HAP-1 (cell line): ENCODE measurements at regions of chr3 and their contacts with region 1.

Region 1: GRCh38 chr3:55485211-55485791 is 1.8 kb downstream of the WNT5A start:
- DNase-seq: peak; percentile 80 to 90
- H3K4me3 ChIP-seq: peak overlapping the region; percentile 66
- H3K4me1 ChIP-seq: peaks cover 2% of the 10 kb centered on the region; the same call in 1 of the 2 replicates
- H3K27me3 ChIP-seq: no peaks in the 10 kb centered on the region

Region 2: GRCh38 chr3:55721716-55722484 is 236.6 kb after region 1 on chr3:
- in situ Hi-C with region 1: loop called (anchors 10 kb)
- DNase-seq: peak in 1 of 2 experiments; percentile 42
- H3K4me3 ChIP-seq: no peak overlapping the region
- H3K4me1 ChIP-seq: no peaks in the 10 kb centered on the region
- H3K27me3 ChIP-seq: no peaks in the 10 kb centered on the region

Region 3: GRCh38 chr3:55790620-55791350 is 305.5 kb after region 1 on chr3:
- in situ Hi-C with region 1: no loop called
- DNase-seq: no peak
- H3K4me3 ChIP-seq: no peak overlapping the region
- H3K4me1 ChIP-seq: no peaks in the 10 kb centered on the region
- H3K27me3 ChIP-seq: no peaks in the 10 kb centered on the region

Region 4: DNA sequence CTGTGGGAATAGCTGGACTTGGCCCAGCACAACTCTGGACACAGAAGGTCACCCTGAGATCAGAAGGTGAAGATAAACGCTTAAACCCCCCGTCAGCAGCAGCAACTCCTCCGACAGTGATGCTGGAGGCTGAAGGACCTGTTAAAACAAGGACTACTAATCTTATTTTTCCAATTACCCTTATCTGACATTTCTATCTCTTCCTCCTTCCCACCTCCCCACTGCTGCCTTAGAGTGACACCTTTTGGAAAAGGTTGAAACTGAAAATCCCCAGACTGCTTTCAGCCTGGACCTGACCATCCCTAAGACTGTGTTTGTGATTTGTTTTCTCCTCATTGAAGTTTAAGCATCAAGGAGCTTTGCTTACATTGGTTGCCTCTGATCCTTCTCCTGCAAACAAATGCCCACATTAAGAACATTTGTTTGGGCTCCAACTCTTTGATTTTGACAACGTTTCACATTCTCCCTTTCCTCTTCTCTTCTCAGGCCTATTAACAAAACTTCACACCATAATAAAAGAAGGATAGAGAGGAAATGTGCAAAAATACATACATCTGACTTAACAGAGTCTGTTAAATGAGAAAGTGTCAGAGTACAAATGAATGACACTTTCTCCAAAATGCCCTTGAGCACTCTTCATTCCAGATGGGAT is 412.4 kb after region 1 on chr3:
- in situ Hi-C with region 1: loop called (anchors 10 kb)
- DNase-seq: peak; percentile 47 to 56
- H3K4me3 ChIP-seq: no peak overlapping the region
- H3K4me1 ChIP-seq: peaks cover 3% of the 10 kb centered on the region; the same call in 1 of the 2 replicates
- H3K27me3 ChIP-seq: no peaks in the 10 kb centered on the region

Region 5: DNA sequence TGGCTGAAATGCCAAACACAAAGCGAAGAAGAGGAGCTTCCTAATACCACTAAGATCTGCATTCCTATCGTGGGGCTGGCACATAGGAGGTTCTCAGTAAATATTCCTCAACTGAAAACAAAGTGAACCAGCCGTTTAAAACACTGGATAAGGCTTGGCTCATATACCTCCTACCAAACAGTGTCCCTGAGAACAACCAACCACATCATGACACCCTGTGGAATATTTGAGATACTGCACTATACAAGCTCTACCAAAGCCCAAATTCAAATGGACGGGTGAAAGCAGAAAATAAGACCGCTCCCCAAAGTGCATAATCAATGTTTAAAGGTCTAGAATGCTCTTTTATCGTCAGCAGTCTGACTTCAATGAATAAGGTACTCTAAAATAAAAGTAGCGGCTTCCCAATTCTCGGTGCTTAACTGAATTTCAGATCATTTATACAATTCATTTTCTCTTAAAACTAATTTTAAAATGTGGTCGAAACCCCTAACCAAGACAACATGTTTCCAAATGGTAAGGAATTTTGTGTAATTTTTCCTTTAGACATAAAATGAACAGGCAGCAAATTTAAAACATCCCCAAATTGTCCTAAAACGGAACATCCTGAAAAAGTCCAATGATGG is 557.1 kb after region 1 on chr3:
- in situ Hi-C with region 1: loop called (anchors 10 kb)
- DNase-seq: peak; percentile 41 to 90
- H3K4me3 ChIP-seq: no peak overlapping the region
- H3K4me1 ChIP-seq: peaks cover 9% of the 10 kb centered on the region
- H3K27me3 ChIP-seq: no peaks in the 10 kb centered on the region

Region 6: GRCh38 chr3:56251343-56251945 is 766.1 kb after region 1 on chr3:
- in situ Hi-C with region 1: loop called (anchors 25 kb)
- DNase-seq: peak; percentile 25 to 60
- H3K4me3 ChIP-seq: no peak overlapping the region
- H3K4me1 ChIP-seq: no peaks in the 10 kb centered on the region
- H3K27me3 ChIP-seq: no peaks in the 10 kb centered on the region